AG04450 (cell line): ENCODE measurements at regions of chr11 and their contacts with region 1.

Region 1: GRCh38 chr11:46392421-46393230 is 1.1 kb upstream of the CHRM4 start:
- DNase-seq: peak; percentile 48
- H3K4me3 ChIP-seq: peak overlapping the region; percentile 48
- H3K27ac ChIP-seq: no peak overlapping the region
- H3K27me3 ChIP-seq: peaks cover 29% of the 10 kb centered on the region
- CTCF ChIP-seq: no peak

Region 2: DNA sequence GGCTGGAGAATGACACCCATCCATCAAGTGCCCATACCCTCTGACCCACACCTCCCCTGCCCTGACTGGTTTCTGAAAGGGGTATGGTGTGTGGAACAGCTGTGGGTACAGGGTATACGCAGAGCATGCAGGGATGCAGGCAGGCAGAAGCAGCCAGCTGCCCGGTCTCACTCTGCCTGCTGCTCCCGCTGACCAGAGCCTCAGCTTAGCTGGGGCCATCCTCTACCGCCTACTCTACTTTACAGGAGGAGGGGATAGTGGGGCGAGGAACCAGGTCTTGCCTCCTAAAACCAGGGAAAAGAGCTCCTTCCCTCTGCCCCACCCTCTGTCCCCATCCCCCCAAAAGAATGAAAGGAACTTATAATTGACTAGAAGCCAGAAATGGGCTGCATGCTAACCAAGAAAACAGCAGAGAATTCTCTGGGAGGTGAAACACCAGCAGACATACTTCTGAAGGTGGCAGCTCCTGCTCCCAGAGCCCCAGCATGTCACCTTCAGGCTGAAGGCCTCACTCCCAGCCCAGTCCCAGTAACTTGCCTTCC is 11.9 kb after region 1 on chr11:
- CTCF ChIA-PET with region 1: interaction called, 19 read pairs
- POLR2A ChIA-PET with region 1: no interaction called
- DNase-seq: no peak
- H3K4me3 ChIP-seq: no peak overlapping the region
- H3K27ac ChIP-seq: no peak overlapping the region
- H3K27me3 ChIP-seq: no peaks in the 10 kb centered on the region
- CTCF ChIP-seq: no peak